MCF 10A (cell line): ENCODE measurements at regions of chr4 and their contacts with region 1.

Region 1: GRCh38 chr4:13892739-13893105 is 265.2 kb upstream of the BOD1L1 start:
- DNase-seq: no peak
- H3K4me3 Mint-ChIP-seq: peak overlapping the region; percentile 25
- H3K27ac Mint-ChIP-seq: peak overlapping the region; percentile 96
- H3K4me1 Mint-ChIP-seq: peaks cover 46% of the 10 kb centered on the region
- H3K27me3 Mint-ChIP-seq: no peaks in the 10 kb centered on the region
- CTCF ChIP-seq: no peak

Region 2: GRCh38 chr4:13907255-13907751 is 14.6 kb after region 1 on chr4:
- CTCF ChIA-PET with region 1: interaction called, 3 read pairs
- POLR2A ChIA-PET with region 1: interaction called, 24 read pairs
- intact Hi-C with region 1: no loop called
- DNase-seq: peak; percentile 95
- H3K4me3 Mint-ChIP-seq: peak overlapping the region; percentile 9
- H3K27ac Mint-ChIP-seq: peak overlapping the region; percentile 96
- H3K4me1 Mint-ChIP-seq: peaks cover 40% of the 10 kb centered on the region
- H3K27me3 Mint-ChIP-seq: no peaks in the 10 kb centered on the region
- CTCF ChIP-seq: peak; percentile 35

Region 3: GRCh38 chr4:14254252-14254651 is 361.5 kb after region 1 on chr4:
- CTCF ChIA-PET with region 1: interaction called, 4 read pairs
- POLR2A ChIA-PET with region 1: no interaction called
- intact Hi-C with region 1: loop called (anchors 5 kb)
- DNase-seq: peak; percentile 71
- H3K4me3 Mint-ChIP-seq: no peak overlapping the region
- H3K27ac Mint-ChIP-seq: no peak overlapping the region
- H3K4me1 Mint-ChIP-seq: no peaks in the 10 kb centered on the region
- H3K27me3 Mint-ChIP-seq: no peaks in the 10 kb centered on the region
- CTCF ChIP-seq: peak; percentile 52

Region 4: GRCh38 chr4:14345356-14345775 is 452.6 kb after region 1 on chr4:
- CTCF ChIA-PET with region 1: no interaction called
- POLR2A ChIA-PET with region 1: no interaction called
- intact Hi-C with region 1: no loop called
- DNase-seq: peak; percentile 52
- H3K4me3 Mint-ChIP-seq: no peak overlapping the region
- H3K27ac Mint-ChIP-seq: peak overlapping the region; percentile 59
- H3K4me1 Mint-ChIP-seq: peaks cover 8% of the 10 kb centered on the region
- H3K27me3 Mint-ChIP-seq: no peaks in the 10 kb centered on the region
- CTCF ChIP-seq: no peak